Caco-2 (cell line): ENCODE measurements at regions of chr1 and their contacts with region 1.

Region 1: DNA sequence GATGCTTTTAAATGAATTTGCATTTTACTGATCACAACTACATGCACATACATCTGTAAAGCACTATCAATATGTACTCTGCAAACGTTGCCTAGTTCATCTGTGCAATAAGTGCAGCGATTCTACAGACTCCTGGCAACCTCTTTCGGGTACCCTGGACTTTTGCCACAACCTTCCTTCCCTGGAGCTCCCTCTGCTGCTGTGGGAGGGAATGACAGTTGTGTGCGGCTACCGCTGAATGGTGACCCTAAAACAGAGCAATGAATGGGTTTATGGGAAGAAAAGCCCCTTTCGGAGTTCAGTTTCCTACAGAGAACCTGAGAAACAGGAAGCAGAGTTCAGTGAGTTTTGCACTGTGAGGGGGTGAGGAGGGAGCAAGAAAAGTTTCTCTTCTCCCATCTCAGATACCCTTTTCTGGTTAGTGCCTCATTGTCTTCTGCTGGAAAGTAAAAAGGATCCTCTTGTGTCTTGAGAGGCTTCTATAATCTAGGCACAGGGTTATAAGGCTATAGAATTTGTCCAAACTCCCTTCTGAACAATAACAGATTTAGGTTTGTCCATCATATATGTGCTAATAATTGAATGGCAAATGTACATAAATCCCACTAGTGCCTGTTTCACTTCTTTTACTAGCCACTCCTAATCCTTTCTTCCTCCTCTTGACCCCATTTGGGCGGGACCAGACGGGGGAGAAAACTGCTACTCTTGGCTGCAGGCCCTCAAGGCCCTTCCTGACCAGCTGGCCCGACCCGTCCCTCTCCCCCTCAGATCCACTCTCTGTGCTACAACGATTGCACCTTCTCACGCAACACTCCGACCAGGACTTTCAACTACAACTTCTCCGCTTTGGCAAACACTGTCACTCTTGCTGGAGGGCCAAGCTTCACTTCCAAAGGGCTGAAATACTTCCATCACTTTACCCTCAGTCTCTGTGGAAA is 19.8 kb upstream of the SARS1 start:
- DNase-seq: peak; percentile 59 to 80
- H3K4me3 ChIP-seq: no peak overlapping the region
- H3K4me3 Mint-ChIP-seq: no peak overlapping the region
- H3K27ac Mint-ChIP-seq: no peak overlapping the region
- H3K4me1 ChIP-seq: peaks cover 8% of the 10 kb centered on the region; the same call in 1 of the 2 replicates
- H3K4me1 Mint-ChIP-seq: peaks cover 8% of the 10 kb centered on the region
- H3K27me3 ChIP-seq: no peaks in the 10 kb centered on the region
- H3K27me3 Mint-ChIP-seq: no peaks in the 10 kb centered on the region
- CTCF ChIP-seq: peak; percentile 73 to 82

Region 2: GRCh38 chr1:109090196-109091077 is 103.5 kb before region 1 on chr1 and contains the start of gene TMEM167B:
- CTCF ChIA-PET with region 1: no interaction called
- POLR2A ChIA-PET with region 1: no interaction called
- intact Hi-C with region 1: loop called (anchors 1 kb)
- DNase-seq: peak; percentile 85 to 92
- H3K4me3 ChIP-seq: peak within 1 kb of the TSS; percentile 48
- H3K4me3 Mint-ChIP-seq: peak within 1 kb of the TSS; percentile 96
- H3K27ac Mint-ChIP-seq: peak within 1 kb of the TSS; percentile 94
- H3K4me1 ChIP-seq: no peaks in the 10 kb centered on the region
- H3K4me1 Mint-ChIP-seq: peaks cover 6% of the 10 kb centered on the region
- H3K27me3 ChIP-seq: no peaks in the 10 kb centered on the region
- H3K27me3 Mint-ChIP-seq: no peaks in the 10 kb centered on the region
- CTCF ChIP-seq: no peak
- total RNA-seq, gene TMEM167B: 21.8 and 23.5 TPM in 2 replicates

Region 3: GRCh38 chr1:109133815-109134214 is 60.1 kb before region 1 on chr1:
- CTCF ChIA-PET with region 1: no interaction called
- POLR2A ChIA-PET with region 1: no interaction called
- intact Hi-C with region 1: loop called (anchors 2 kb)
- DNase-seq: no peak
- H3K4me3 ChIP-seq: no peak overlapping the region
- H3K4me3 Mint-ChIP-seq: no peak overlapping the region
- H3K27ac Mint-ChIP-seq: no peak overlapping the region
- H3K4me1 ChIP-seq: peaks cover 39% of the 10 kb centered on the region
- H3K4me1 Mint-ChIP-seq: peaks cover 18% of the 10 kb centered on the region
- H3K27me3 ChIP-seq: no peaks in the 10 kb centered on the region
- H3K27me3 Mint-ChIP-seq: no peaks in the 10 kb centered on the region
- CTCF ChIP-seq: no peak

Region 4: GRCh38 chr1:109181105-109181806 is 12.7 kb before region 1 on chr1:
- CTCF ChIA-PET with region 1: interaction called, 4 read pairs
- POLR2A ChIA-PET with region 1: no interaction called
- intact Hi-C with region 1: loop called (anchors 1 kb)
- DNase-seq: peak; percentile 71 to 72
- H3K4me3 ChIP-seq: no peak overlapping the region
- H3K4me3 Mint-ChIP-seq: peak overlapping the region; percentile 45
- H3K27ac Mint-ChIP-seq: peak overlapping the region; percentile 73
- H3K4me1 ChIP-seq: peaks cover 35% of the 10 kb centered on the region
- H3K4me1 Mint-ChIP-seq: peaks cover 18% of the 10 kb centered on the region
- H3K27me3 ChIP-seq: no peaks in the 10 kb centered on the region
- H3K27me3 Mint-ChIP-seq: no peaks in the 10 kb centered on the region
- CTCF ChIP-seq: no peak